ENCODE measurements at regions of chr14 and their contacts with region 1.

Region 1: DNA sequence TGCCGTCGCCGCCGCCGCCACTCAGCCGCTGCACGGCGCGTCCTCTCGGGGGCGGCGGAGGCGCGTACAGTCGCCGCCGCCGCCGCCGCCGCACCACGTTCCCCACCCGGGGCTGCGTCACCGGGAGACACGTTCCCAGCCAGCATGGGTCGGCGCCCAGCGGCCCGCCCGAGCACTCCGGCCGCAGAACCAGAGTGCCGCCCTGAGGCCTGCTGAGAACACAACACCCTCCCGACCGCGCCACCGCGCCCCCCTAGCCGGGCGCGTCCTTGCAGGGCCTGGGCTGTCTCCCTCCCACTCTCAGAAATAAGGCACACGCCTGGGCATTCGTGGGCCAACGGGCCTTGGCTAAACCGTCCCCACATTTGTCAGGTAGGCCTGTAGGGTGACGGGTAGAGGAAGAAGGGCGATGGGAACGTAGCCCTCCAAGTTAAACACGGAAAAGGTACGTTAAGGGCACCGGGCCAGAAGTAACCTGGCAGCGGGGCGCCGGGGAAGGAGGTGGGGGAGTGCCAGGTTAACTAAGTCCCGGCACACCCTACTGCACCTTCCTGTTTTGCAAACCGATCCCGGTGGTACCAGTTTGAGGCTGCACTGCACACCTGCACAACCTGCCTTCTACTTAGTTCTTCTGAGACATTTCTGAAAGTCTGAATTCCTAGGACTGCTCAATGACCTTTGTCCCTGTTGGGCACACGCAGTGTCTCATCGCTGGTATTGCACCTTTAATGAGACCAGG is at the start of gene MAP4K5:
- DNase-seq: peak; percentile 96
- ATAC-seq: peak; percentile 82
- H3K4me3 ChIP-seq: peak within 1 kb of the TSS; percentile 82
- H3K27ac ChIP-seq: peak within 1 kb of the TSS; percentile 72
- H3K4me1 ChIP-seq: peaks cover 47% of the 10 kb centered on the region
- H3K27me3 ChIP-seq: no peaks in the 10 kb centered on the region
- CTCF ChIP-seq: peak; percentile 94
- total RNA-seq, gene MAP4K5: 111 and 120 TPM in 2 replicates

Region 2: DNA sequence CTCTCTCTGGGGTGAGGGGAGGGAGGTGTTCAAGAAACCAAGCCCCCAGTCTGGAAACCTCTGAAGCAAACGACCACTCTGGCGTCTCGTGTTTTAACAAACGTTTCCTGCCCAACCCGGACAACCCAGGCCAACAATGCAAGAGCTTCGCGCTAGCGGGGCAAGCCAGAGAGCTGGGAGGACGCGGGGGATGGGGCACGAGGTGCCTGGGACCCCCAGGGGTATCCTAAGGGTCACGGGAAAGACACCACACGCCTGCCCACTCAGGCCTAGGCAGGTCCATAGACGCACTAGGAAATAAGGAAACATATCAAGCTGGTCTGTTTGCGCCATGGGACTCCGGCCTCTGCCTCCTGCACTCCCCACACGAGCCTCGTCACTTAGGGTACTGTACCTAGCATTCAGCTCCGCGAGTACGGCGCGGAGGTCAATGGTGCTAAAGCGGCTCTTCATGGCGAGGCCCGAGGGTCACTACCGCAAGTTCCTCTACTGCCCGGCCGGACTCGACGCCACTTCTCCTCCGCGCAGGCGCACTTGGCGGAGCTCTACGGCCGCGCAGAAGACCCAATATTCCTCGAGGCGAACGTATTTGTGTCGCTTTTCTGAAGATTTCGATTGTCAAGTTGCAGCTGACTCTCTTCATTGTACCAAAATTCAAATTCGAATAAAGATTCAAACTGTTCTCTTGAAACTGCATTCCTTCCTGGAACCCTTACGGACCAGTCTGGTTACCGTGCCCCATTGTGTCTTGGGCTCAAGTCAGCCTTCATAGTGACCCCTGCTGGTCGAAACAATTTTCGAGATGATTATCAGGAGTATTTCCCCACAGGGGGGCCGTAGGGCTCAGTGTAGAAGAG is 680.1 kb before region 1 on chr14 and contains the start of gene NEMF:
- CTCF ChIA-PET with region 1: no interaction called
- POLR2A ChIA-PET with region 1: no interaction called
- intact Hi-C with region 1: loop called (anchors 1 kb)
- DNase-seq: peak; percentile 95
- ATAC-seq: peak; percentile 66
- H3K4me3 ChIP-seq: peak within 1 kb of the TSS; percentile 87
- H3K27ac ChIP-seq: peak within 1 kb of the TSS; percentile 31
- H3K4me1 ChIP-seq: peaks cover 32% of the 10 kb centered on the region
- H3K27me3 ChIP-seq: no peaks in the 10 kb centered on the region
- CTCF ChIP-seq: peak; percentile 98
- total RNA-seq, gene NEMF: 52.9 and 54.0 TPM in 2 replicates

Region 3: GRCh38 chr14:50231475-50232275 is 301.0 kb before region 1 on chr14 and contains the start of gene SOS2:
- CTCF ChIA-PET with region 1: no interaction called
- POLR2A ChIA-PET with region 1: no interaction called
- intact Hi-C with region 1: loop called (anchors 5 kb)
- DNase-seq: peak; percentile 78
- ATAC-seq: peak; percentile 83
- H3K4me3 ChIP-seq: peak within 1 kb of the TSS; percentile 93
- H3K27ac ChIP-seq: peak within 1 kb of the TSS; percentile 18
- H3K4me1 ChIP-seq: peaks cover 34% of the 10 kb centered on the region
- H3K27me3 ChIP-seq: no peaks in the 10 kb centered on the region
- CTCF ChIP-seq: 0 out of 2 replicates have a peak, but pooled peaks have one; percentile 11
- total RNA-seq, gene SOS2: 9.1 and 9.9 TPM in 2 replicates

Region 4: DNA sequence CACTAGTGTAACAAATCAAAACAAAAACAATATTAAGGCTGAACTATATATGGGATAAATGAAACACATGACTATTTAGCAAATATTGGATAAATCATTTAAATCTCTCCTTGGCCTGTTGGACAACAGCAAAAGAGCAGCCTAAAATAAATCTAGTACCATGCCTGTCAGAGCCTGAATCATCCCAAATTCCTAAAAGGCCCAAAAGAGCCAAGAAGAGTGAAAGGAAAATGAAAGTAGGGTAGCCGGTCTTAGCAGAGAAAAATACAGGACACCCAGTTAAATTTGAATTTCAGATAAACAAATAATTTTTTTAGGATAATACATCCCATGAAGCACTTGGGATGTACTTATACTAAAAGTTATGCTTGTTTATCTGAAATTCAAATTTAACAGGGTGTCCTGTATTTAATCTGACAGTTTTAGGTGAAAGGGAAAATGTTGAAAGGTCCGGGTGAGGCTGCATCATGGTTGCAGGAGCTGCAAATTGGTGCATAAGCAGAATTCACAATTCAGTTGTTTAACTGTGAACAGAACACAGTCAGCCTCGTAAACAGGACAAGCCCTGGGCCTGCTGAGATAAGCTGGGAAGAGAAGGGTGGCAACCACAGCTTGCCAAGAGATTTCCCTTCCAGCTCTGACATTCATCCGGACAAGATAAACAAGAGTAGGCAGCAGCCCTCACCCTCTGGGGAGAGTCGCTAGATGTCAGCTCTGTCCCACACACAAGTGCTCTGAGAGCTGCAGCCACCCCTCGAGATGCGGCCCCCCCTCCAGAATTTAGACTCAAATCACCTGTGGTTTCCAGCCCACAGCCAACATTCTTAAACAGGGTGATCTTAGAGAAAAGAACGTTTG is 190.2 kb before region 1 on chr14:
- CTCF ChIA-PET with region 1: interaction called, 14 read pairs
- POLR2A ChIA-PET with region 1: interaction called, 4 read pairs
- intact Hi-C with region 1: loop called (anchors 1 kb)
- DNase-seq: peak; percentile 86
- ATAC-seq: peak; percentile 95
- H3K4me3 ChIP-seq: peak overlapping the region; percentile 13; the same call in 1 of the 2 replicates
- H3K27ac ChIP-seq: no peak overlapping the region
- H3K4me1 ChIP-seq: peaks cover 22% of the 10 kb centered on the region
- H3K27me3 ChIP-seq: no peaks in the 10 kb centered on the region
- CTCF ChIP-seq: peak; percentile 72

Region 5: DNA sequence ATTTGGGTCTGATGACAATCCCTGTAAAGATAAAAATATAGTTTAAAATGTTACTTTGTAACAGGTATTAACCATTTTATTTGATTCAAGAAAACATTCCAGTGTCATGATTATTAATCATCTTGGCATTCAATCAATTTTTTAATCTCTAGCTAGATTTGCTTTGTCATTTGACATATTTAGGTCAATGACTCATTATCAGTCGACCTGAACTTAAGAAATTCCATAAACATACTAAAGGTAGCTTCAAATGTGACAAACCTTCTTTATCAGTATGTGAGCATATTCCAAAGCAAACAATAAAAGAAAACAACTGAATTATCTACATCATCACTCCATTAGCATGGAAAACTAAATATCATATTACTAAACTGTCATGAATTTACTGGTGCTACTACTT is 85.2 kb before region 1 on chr14:
- CTCF ChIA-PET with region 1: interaction called, 9 read pairs
- POLR2A ChIA-PET with region 1: no interaction called
- intact Hi-C with region 1: loop called (anchors 1 kb)
- DNase-seq: peak; percentile 93
- ATAC-seq: peak; percentile 75
- H3K4me3 ChIP-seq: no peak overlapping the region
- H3K27ac ChIP-seq: peak overlapping the region; percentile 50
- H3K4me1 ChIP-seq: peaks cover 31% of the 10 kb centered on the region
- H3K27me3 ChIP-seq: no peaks in the 10 kb centered on the region
- CTCF ChIP-seq: no peak

Region 6: DNA sequence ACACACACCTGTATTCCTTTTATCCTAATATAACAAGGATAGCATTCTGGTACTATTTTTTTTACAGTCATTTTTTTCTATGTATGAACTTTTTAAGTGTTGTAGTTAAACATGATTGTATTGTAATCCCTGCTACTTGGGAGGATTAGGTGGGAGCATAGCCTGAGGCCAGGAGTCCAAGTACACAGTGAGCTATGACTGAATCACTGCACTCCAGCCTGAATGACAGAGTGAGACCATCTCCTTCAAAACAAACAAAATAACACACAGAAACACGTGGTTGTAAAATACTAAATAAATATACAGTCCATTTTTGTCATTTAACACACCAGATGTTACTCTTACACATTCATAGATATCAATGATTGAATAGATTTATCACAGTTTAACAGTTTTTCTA is 57.2 kb before region 1 on chr14:
- CTCF ChIA-PET with region 1: no interaction called
- POLR2A ChIA-PET with region 1: no interaction called
- intact Hi-C with region 1: loop called (anchors 1 kb)
- DNase-seq: peak; percentile 95
- ATAC-seq: peak; percentile 100
- H3K4me3 ChIP-seq: no peak overlapping the region
- H3K27ac ChIP-seq: peak overlapping the region; percentile 26
- H3K4me1 ChIP-seq: peaks cover 11% of the 10 kb centered on the region; the same call in 1 of the 2 replicates
- H3K27me3 ChIP-seq: no peaks in the 10 kb centered on the region
- CTCF ChIP-seq: no peak

Region 7: GRCh38 chr14:50489489-50490250 is 43.0 kb before region 1 on chr14:
- CTCF ChIA-PET with region 1: no interaction called
- POLR2A ChIA-PET with region 1: no interaction called
- intact Hi-C with region 1: no loop called
- DNase-seq: no peak
- ATAC-seq: no peak
- H3K4me3 ChIP-seq: no peak overlapping the region
- H3K27ac ChIP-seq: no peak overlapping the region
- H3K4me1 ChIP-seq: no peaks in the 10 kb centered on the region
- H3K27me3 ChIP-seq: no peaks in the 10 kb centered on the region
- CTCF ChIP-seq: no peak

Region 8: GRCh38 chr14:50512463-50512862 is 20.2 kb before region 1 on chr14:
- CTCF ChIA-PET with region 1: no interaction called
- POLR2A ChIA-PET with region 1: no interaction called
- intact Hi-C with region 1: no loop called
- DNase-seq: no peak
- ATAC-seq: no peak
- H3K4me3 ChIP-seq: no peak overlapping the region
- H3K27ac ChIP-seq: no peak overlapping the region
- H3K4me1 ChIP-seq: no peaks in the 10 kb centered on the region
- H3K27me3 ChIP-seq: no peaks in the 10 kb centered on the region
- CTCF ChIP-seq: no peak